ENCODE measurements at regions of chr4 and their contacts with region 1.

Region 1: GRCh38 chr4:82373816-82374625 is at the start of gene HNRNPD:
- DNase-seq: peak; percentile 78 to 99
- ATAC-seq: peak; percentile 93
- H3K4me3 ChIP-seq: peak within 1 kb of the TSS; percentile 85
- H3K27ac ChIP-seq: peak within 1 kb of the TSS; percentile 97 to 100
- H3K4me1 ChIP-seq: peaks cover 26% of the 10 kb centered on the region
- CTCF ChIP-seq: no peak
- EP300 ChIP-seq: peak in 1 of 2 experiments; percentile 25; a peak in 1 of 5 replicates
- POLR2A ChIP-seq: peak; percentile 77
- RAD21 ChIP-seq: no peak; a peak in 2 of 5 replicates
- polyA plus RNA-seq, gene HNRNPD: 65.5 and 125 TPM in 2 replicates

Region 2: GRCh38 chr4:82284858-82285805 is 88.9 kb before region 1 on chr4:
- CTCF ChIA-PET with region 1: no interaction called
- POLR2A ChIA-PET with region 1: interaction called, 11 read pairs
- DNase-seq: peak; percentile 85 to 98
- ATAC-seq: peak; percentile 98 to 100
- H3K4me3 ChIP-seq: peak overlapping the region; percentile 43
- H3K27ac ChIP-seq: peak overlapping the region in 1 of 2 experiments; percentile 20; a peak in 2 of 6 replicates
- H3K4me1 ChIP-seq: 0 out of 3 replicates have a peak, but pooled peaks cover 4% of the 10 kb centered on the region
- CTCF ChIP-seq: peak; percentile 68
- EP300 ChIP-seq: no peak
- POLR2A ChIP-seq: no peak
- RAD21 ChIP-seq: peak in 1 of 2 experiments; percentile 36; a peak in 3 of 5 replicates

Region 3: GRCh38 chr4:82360298-82361177 is 13.5 kb before region 1 on chr4:
- CTCF ChIA-PET with region 1: interaction called, 12 read pairs
- POLR2A ChIA-PET with region 1: interaction called, 7 read pairs
- DNase-seq: peak in 1 of 2 experiments; percentile 27
- ATAC-seq: peak; percentile 65 to 75; a peak in 4 of 6 replicates
- H3K4me3 ChIP-seq: no peak overlapping the region
- H3K27ac ChIP-seq: no peak overlapping the region
- H3K4me1 ChIP-seq: peaks cover 25% of the 10 kb centered on the region; the same call in 2 of the 3 replicates
- CTCF ChIP-seq: peak; percentile 56
- EP300 ChIP-seq: no peak
- POLR2A ChIP-seq: no peak
- RAD21 ChIP-seq: peak; percentile 37 to 43

Region 4: DNA sequence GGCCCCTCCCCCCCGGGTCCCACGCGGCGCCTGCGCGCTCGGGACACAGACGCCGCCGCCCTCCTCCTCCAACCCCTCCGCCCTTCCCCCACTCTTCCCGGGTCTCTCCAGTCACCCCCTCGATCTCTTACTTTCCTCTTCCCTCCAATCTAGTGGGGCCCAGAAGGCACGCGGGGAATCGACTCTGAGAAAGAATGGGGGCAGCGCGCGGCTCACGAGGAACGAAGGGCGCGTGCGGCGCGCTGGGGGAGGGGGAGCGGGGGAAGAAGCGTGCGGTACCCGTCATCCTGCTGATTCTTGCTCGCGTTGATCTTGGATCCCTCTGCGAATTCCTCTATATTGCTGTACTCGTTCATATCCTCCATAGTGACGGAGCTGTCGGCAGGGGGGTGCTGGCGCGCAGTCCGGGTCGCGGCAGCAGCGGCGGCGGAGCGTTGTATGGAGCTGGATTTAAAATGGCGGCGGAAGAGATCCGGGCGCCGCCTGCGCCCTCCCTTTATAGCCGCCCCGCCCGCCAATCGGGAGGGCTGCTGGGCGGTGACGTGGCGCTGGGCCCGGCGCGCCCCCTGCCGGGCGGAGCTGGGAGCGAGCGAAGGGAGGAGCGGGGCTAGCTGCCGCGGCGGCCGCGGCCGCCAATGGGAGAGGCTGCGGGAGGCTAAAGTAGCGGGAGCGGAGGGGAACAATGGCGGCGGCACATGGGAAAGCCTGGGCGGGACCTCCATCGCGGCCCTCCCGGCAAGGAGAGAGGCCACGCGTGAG is 55.1 kb after region 1 on chr4:
- CTCF ChIA-PET with region 1: interaction called, 5 read pairs
- POLR2A ChIA-PET with region 1: interaction called, 61 read pairs
- DNase-seq: peak; percentile 57 to 86
- ATAC-seq: peak; percentile 71 to 77
- H3K4me3 ChIP-seq: peak overlapping the region; percentile 90
- H3K27ac ChIP-seq: peak overlapping the region; percentile 100
- H3K4me1 ChIP-seq: peaks cover 45% of the 10 kb centered on the region
- CTCF ChIP-seq: peak; percentile 64
- EP300 ChIP-seq: no peak
- POLR2A ChIP-seq: peak; percentile 81
- RAD21 ChIP-seq: 0 out of 5 replicates have a peak, but pooled peaks of 1 of the 2 experiments have one; percentile 20

Region 5: GRCh38 chr4:82811838-82812341 is 437.9 kb after region 1 on chr4:
- CTCF ChIA-PET with region 1: no interaction called
- POLR2A ChIA-PET with region 1: interaction called, 13 read pairs
- DNase-seq: no peak
- ATAC-seq: no peak
- H3K4me3 ChIP-seq: no peak overlapping the region
- H3K27ac ChIP-seq: no peak overlapping the region
- H3K4me1 ChIP-seq: no peaks in the 10 kb centered on the region
- CTCF ChIP-seq: no peak
- EP300 ChIP-seq: no peak
- POLR2A ChIP-seq: no peak
- RAD21 ChIP-seq: no peak

Measured in A549 (cell line).